Activated naive CD4-positive, alpha-beta T cell treated with anti-CD3 and anti-CD28 coated beads for 36 hours (primary cell): ENCODE measurements at regions of chr15 and their contacts with region 1.

Region 1: GRCh38 chr15:78131295-78132061 is at the start of gene CIB2:
- DNase-seq: peak; percentile 73
- H3K4me3 Mint-ChIP-seq: peak within 1 kb of the TSS; percentile 81
- H3K27ac Mint-ChIP-seq: peak within 1 kb of the TSS; percentile 47
- H3K4me1 Mint-ChIP-seq: peaks cover 17% of the 10 kb centered on the region
- H3K27me3 Mint-ChIP-seq: no peaks in the 10 kb centered on the region
- total RNA-seq, gene CIB2: 1.9 to 2.1 TPM

Region 2: GRCh38 chr15:78101463-78102139 is 29.9 kb before region 1 on chr15:
- CTCF ChIA-PET with region 1: no interaction called
- intact Hi-C with region 1: no loop called
- DNase-seq: no peak
- H3K4me3 Mint-ChIP-seq: no peak overlapping the region
- H3K27ac Mint-ChIP-seq: no peak overlapping the region
- H3K4me1 Mint-ChIP-seq: peaks cover 30% of the 10 kb centered on the region
- H3K27me3 Mint-ChIP-seq: no peaks in the 10 kb centered on the region

Region 3: DNA sequence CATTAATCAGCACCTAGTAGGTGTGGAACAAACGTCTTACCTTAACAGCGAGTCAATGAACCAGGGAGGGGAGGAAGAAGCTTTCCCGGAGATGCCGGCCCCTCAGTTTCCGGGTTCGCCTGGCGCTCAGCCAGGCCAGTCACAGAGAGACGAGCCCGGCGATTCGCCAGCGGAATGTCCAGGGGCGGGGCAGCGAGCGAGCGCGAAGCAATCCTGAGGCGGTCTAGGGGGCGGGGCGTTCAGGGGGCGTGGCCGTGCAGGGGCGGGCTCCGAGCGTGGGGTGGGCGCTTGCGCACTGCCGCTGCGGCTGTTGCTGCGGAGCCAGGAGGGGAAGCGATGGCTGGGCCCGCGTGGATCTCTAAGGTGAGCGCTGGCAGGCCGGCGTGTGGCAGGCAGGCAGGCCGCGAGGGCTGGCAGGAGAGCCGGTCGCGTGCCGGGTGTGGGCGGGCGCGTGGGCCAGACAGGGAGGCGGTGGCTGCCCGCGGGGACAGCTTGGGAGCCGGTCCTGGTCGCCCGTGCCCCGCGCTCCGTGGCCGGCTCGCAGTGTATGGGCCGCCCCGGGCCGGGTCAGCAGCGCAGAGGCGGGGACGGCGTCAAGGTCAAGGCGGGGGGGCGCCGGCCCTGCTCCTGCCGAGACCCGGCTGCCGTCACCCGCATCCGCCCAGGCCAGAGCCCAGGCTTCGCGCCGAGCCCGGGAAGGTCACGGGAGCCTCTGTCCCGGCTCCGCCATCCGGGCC is 17.8 kb after region 1 on chr15 and contains the start of gene IDH3A:
- CTCF ChIA-PET with region 1: interaction called, 5 read pairs
- intact Hi-C with region 1: loop called (anchors 1 kb)
- DNase-seq: peak; percentile 100
- H3K4me3 Mint-ChIP-seq: peak within 1 kb of the TSS; percentile 89
- H3K27ac Mint-ChIP-seq: peak within 1 kb of the TSS; percentile 89
- H3K4me1 Mint-ChIP-seq: peaks cover 41% of the 10 kb centered on the region
- H3K27me3 Mint-ChIP-seq: no peaks in the 10 kb centered on the region
- total RNA-seq, gene IDH3A: 117 to 123 TPM

Region 4: DNA sequence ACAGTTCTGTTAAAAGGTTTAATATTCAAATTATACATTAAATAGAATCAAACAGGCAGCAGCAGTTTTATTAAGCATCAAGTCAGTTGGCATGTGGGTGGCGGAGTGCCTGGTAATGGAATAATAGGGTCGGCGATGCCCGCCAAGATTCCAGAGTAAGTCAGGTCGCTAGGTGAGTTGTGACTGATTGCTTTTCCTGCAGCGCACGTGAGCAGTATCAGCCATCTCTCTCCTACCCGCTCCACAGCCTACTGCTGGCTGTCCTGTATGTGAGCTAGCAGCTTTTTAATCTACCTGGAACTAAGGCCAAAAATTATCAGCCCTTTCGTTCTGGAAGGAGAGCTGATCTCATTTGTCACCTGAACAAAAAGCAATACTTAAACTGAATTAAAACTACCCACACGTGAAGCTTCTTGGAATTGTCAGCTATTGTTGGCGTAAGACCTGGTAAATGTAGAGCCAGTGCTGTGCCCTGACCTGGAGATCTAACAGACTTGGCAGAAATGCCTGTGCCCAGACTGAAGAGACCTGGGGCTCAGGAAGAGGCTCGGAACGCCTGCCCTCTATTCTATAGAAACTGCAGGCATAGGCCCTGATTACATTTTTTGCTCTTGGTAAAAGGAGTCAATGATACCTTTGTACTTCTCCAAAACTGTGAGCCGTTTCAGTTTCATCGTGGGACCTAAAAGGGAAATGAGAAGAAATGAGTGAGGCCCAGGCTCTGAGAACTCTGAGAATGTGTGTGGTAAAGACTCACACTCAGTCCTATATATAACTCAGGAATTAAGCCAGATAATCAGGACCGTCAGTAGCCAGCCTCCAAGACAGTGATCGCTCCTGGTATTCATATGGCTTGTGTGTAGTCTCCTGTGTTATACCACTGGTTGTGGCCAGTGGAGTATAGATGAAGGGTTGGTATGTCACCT is 39.6 kb after region 1 on chr15:
- CTCF ChIA-PET with region 1: interaction called, 10 read pairs
- intact Hi-C with region 1: loop called (anchors 5 kb)
- DNase-seq: no peak
- H3K4me3 Mint-ChIP-seq: no peak overlapping the region
- H3K27ac Mint-ChIP-seq: no peak overlapping the region
- H3K4me1 Mint-ChIP-seq: peaks cover 38% of the 10 kb centered on the region
- H3K27me3 Mint-ChIP-seq: no peaks in the 10 kb centered on the region

Region 5: DNA sequence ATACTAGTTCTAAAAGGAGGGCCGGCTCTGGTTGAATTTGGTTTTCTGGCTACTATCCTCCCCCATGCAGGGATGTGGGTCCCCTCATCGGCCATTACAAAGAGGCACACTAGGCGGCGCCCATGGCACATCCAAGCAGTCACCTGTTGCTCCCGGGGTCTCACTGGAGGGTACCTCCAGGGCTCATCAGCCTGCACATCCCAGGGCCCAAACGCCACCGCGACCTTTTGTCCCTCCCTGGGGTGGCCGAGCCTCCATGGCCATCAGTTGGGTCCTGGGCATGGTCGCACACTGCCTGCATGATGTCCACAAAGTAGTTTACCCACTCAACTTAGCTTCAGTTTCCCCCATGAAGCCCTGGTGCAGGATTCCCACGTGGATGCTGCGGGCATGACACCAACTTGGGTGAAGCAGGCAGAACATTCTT is 46.0 kb after region 1 on chr15:
- CTCF ChIA-PET with region 1: interaction called, 10 read pairs
- intact Hi-C with region 1: no loop called
- DNase-seq: peak; percentile 58
- H3K4me3 Mint-ChIP-seq: no peak overlapping the region
- H3K27ac Mint-ChIP-seq: no peak overlapping the region
- H3K4me1 Mint-ChIP-seq: peaks cover 17% of the 10 kb centered on the region
- H3K27me3 Mint-ChIP-seq: no peaks in the 10 kb centered on the region

Region 6: DNA sequence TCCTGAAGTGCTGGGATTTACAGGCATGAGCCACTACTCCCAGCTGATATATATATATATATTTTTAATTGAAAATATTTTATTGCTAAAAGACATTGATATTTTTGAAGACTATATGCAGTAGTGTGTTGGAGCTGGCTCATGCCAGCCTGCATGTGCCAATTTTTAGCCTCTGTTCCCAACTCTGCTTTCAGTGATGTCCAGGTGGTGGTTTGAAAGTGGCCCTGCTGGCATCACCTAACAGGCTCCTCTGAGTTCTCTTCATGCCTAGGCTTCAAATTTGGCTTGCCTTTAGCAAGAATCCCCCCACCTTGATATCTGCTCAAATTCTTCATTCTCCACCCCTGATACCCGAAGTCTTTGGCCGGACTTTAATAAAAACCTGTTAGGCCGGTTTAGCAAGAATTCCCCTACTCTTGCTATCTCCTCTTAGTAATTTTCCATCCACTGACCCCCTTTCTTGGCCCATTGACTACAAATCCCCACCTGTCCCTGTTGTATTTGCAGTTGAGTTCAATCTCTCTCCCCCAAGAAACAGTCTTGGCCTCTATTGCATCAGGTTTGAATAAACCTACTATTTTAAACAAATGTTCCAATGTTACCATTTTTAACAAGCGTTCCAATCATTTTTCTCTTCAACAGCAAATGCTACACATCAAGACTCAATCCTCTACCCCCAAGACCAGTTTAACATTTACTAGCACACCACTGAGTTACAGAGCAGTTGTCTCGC is 837.2 kb after region 1 on chr15:
- CTCF ChIA-PET with region 1: no interaction called
- intact Hi-C with region 1: no loop called
- DNase-seq: no peak
- H3K4me3 Mint-ChIP-seq: no peak overlapping the region
- H3K27ac Mint-ChIP-seq: no peak overlapping the region
- H3K4me1 Mint-ChIP-seq: no peaks in the 10 kb centered on the region
- H3K27me3 Mint-ChIP-seq: no peaks in the 10 kb centered on the region